Transverse colon (tissue), 4 donors: ENCODE measurements at regions of chr11 and their contacts with region 1.

Region 1: DNA sequence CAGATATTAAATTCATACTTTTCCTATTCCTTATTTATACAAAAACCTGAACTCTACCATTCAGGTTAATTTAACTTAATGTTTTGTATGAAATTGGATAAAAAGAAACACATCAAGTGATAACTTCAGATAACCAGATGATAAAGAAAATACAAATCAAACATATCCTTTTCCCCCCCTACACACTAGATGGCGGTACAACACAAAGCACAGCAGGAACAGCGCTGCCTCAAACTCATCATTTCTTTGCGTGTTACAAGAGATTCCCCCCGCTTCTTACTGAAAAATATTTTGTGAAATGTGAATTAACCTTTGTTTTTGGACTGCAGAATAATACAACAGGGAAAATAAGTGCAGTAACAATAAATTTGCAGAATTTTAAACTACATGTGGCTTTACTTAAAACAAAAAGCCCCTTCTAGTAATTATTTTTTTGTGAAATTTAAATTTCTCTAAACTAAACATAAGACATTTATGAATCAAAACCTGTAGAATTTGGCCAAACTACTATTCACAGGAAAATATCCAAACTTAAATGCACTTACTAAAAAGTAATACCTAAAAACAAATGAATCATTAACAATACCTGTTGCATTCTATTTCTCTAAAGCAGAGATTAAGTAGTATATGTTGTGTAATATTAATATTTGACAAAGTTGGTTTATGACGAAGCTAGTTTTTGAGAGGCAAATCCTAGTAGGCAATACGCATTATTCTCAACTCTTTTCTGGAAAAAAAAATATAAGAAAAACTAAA is 74.4 kb downstream of the ARHGAP32 start:
- DNase-seq: peak; percentile 20
- H3K4me3 ChIP-seq: no peak overlapping the region
- H3K27ac ChIP-seq: no peak overlapping the region
- H3K4me1 ChIP-seq: peaks cover 0 to 11% (median 6%) of the 10 kb centered on the region in 4 donors
- H3K27me3 ChIP-seq: no peaks in the 10 kb centered on the region
- CTCF ChIP-seq: peak; percentile 79 to 91 (median 82)
- EP300 ChIP-seq: no peak
- POLR2A ChIP-seq: no peak

Region 2: GRCh38 chr11:129041611-129042018 is 76.2 kb before region 1 on chr11:
- in situ Hi-C with region 1: no loop called
- intact Hi-C with region 1: no loop called
- DNase-seq: no peak
- H3K4me3 ChIP-seq: no peak overlapping the region
- H3K27ac ChIP-seq: no peak overlapping the region
- H3K4me1 ChIP-seq: no peaks in the 10 kb centered on the region
- H3K27me3 ChIP-seq: no peaks in the 10 kb centered on the region
- CTCF ChIP-seq: no peak
- EP300 ChIP-seq: no peak
- POLR2A ChIP-seq: no peak

Region 3: DNA sequence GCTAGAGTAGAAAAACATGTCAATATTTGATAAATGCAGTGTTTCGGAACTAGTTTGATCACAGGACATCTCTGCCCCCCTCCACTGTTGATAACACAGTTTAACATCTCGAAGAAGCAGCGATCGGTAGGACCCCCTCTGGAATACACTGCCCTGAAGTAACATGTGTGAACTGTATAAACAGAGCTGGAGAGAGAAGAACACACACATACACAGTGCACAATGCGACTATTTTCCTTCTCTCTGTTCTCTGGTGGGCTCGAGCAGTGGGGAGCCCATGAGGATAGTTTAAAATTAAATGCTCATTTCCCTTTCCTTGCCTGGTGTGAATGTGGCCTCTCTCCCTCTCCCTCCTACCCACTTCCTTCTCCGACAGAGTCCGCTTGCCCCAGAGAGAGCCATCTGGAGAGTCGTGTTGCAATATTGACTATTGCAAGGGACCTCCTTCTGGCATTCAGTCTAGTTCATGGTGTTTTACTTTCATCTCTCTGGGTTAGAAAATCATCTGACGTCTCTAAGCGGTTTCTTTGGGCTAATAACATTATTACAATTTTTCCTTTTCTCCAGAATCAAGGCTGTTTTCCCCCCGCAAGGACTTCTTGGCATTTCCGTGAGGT is 206.2 kb after region 1 on chr11:
- in situ Hi-C with region 1: loop called in 3 of 4 experiments (anchors 5 to 10 kb)
- intact Hi-C with region 1: no loop called
- DNase-seq: peak; percentile 27
- H3K4me3 ChIP-seq: peak overlapping the region in 1 of 4 donors; percentile 16
- H3K27ac ChIP-seq: peak overlapping the region; percentile 57 to 80 (median 78)
- H3K4me1 ChIP-seq: peaks cover 12 to 44% (median 28%) of the 10 kb centered on the region in 4 donors
- H3K27me3 ChIP-seq: no peaks in the 10 kb centered on the region
- CTCF ChIP-seq: no peak
- EP300 ChIP-seq: no peak
- POLR2A ChIP-seq: no peak

Region 4: GRCh38 chr11:129331871-129332274 is 214.1 kb after region 1 on chr11:
- in situ Hi-C with region 1: loop called in 3 of 4 experiments (anchors 5 to 10 kb)
- intact Hi-C with region 1: loop called (anchors 5 kb)
- DNase-seq: peak; percentile 88
- H3K4me3 ChIP-seq: no peak overlapping the region
- H3K27ac ChIP-seq: no peak overlapping the region
- H3K4me1 ChIP-seq: peaks cover 0 to 9% (median 5%) of the 10 kb centered on the region in 4 donors
- H3K27me3 ChIP-seq: no peaks in the 10 kb centered on the region
- CTCF ChIP-seq: peak; percentile 72 to 88 (median 83)
- EP300 ChIP-seq: no peak
- POLR2A ChIP-seq: no peak

Region 5: DNA sequence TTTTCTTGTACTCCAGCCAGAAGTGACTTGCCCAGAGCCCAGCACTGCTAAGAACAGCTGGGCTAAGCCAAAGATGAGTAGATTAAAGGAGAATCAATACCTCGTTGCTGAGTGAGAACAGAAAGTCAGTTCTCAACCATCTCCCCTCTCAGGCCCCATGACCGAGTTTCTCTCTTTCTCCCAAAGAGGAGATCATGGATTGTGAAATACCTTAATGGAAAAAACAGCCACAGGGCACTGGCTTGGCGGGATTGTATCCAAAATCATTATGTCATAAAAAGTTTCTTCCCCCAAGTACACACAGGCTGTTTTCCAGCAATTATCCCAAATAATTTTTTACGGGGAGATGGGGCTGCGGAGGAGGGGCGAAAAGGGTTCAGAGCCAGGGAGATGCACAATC is 586.1 kb after region 1 on chr11:
- in situ Hi-C with region 1: loop called in 1 of 4 experiments (anchors 25 kb)
- intact Hi-C with region 1: no loop called
- DNase-seq: no peak
- H3K4me3 ChIP-seq: no peak overlapping the region
- H3K27ac ChIP-seq: no peak overlapping the region
- H3K4me1 ChIP-seq: no peaks in the 10 kb centered on the region
- H3K27me3 ChIP-seq: no peaks in the 10 kb centered on the region
- CTCF ChIP-seq: no peak
- EP300 ChIP-seq: no peak
- POLR2A ChIP-seq: no peak

Region 6: GRCh38 chr11:129728575-129728974 is 610.8 kb after region 1 on chr11:
- in situ Hi-C with region 1: loop called in 2 of 4 experiments (anchors 25 kb)
- intact Hi-C with region 1: no loop called
- DNase-seq: no peak
- H3K4me3 ChIP-seq: no peak overlapping the region
- H3K27ac ChIP-seq: no peak overlapping the region
- H3K4me1 ChIP-seq: no peaks in the 10 kb centered on the region
- H3K27me3 ChIP-seq: no peaks in the 10 kb centered on the region
- CTCF ChIP-seq: no peak
- EP300 ChIP-seq: no peak
- POLR2A ChIP-seq: no peak